Endothelial cell of umbilical vein (primary cell): ENCODE measurements at regions of chr1 and their contacts with region 1.

Region 1: GRCh38 chr1:112444269-112444668 is 48.3 kb downstream of the CTTNBP2NL start:
- DNase-seq: peak; percentile 84
- H3K4me3 ChIP-seq: no peak overlapping the region
- H3K27ac ChIP-seq: peak overlapping the region; percentile 95
- H3K4me1 ChIP-seq: peaks cover 45% of the 10 kb centered on the region
- H3K27me3 ChIP-seq: no peaks in the 10 kb centered on the region
- CTCF ChIP-seq: no peak
- POLR2A ChIP-seq: no peak

Region 2: DNA sequence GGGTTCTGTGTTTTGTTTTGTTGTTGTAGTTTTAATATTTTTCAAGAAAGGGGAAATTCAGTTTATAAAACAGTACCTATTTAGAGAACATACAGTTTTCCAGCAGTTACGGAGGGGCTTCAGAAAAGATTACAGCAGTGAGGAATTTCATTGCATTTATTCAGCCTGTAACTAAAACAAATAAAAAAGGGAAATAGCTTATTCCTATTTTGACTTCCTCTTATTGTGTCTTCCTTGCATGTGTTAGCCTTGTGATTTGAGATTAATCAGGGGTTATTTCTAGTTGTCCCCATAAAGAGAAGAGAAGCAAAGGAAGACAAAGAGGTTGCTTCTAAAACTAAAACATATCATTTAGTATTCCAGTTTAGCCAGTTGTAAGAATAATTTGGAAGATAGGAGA is 13.2 kb before region 1 on chr1:
- CTCF ChIA-PET with region 1: interaction called, 16 read pairs
- POLR2A ChIA-PET with region 1: interaction called, 10 read pairs
- dilution Hi-C with region 1: no loop called
- intact Hi-C with region 1: loop called (anchors 1 kb)
- DNase-seq: peak; percentile 78
- H3K4me3 ChIP-seq: peak overlapping the region in 1 of 3 experiments; percentile 37
- H3K27ac ChIP-seq: peak overlapping the region; percentile 95
- H3K4me1 ChIP-seq: peaks cover 73% of the 10 kb centered on the region
- H3K27me3 ChIP-seq: no peaks in the 10 kb centered on the region
- CTCF ChIP-seq: no peak
- POLR2A ChIP-seq: no peak